ENCODE measurements at regions of chr2 and their contacts with region 1.

Region 1: DNA sequence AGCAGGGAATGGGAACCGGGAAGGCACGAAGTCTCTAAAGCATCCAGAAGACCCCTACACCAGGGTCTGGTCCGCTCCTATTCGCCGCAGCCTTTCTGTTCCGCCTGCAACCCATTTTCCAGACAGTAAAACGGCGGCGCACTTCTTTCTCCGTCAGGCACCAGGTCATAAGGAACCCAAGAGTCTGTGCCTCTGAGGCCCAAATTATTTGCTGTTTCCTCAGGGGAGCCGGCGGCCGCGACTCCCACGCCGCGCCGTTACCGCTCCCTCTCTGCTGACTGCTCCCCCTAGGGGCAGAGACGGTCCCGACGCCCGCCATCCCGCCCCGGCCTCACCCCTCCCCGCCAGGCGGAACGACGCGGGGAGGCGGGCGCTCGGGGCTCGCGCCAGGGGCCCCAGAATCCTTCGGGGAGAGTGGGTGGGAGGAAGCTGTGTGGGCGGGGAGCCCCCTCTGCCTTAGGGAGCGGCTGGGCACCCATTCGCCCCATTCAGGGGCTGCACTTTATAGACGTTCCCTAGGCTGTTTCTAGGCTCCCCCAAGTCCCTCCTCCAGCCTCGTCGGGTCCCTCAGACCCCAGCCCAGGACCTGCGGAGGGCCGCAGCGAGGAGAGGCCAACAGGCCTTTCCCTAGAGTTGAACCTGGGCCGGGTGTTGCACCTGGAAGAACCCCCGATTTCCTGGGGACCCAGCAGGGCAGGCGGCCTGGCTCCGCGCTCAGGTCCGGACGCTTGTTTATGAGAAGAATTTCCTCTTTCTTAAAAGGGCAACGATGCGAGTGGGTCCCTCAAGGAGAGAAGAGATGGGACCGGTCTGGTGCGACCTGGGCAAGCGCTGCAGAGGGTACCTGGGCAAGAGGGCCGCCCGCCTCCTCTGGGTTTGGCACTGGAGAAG is 3.6 kb upstream of the CTDSP1 start:
- DNase-seq: peak; percentile 93
- CTCF ChIP-seq: peak; percentile 77

Region 2: DNA sequence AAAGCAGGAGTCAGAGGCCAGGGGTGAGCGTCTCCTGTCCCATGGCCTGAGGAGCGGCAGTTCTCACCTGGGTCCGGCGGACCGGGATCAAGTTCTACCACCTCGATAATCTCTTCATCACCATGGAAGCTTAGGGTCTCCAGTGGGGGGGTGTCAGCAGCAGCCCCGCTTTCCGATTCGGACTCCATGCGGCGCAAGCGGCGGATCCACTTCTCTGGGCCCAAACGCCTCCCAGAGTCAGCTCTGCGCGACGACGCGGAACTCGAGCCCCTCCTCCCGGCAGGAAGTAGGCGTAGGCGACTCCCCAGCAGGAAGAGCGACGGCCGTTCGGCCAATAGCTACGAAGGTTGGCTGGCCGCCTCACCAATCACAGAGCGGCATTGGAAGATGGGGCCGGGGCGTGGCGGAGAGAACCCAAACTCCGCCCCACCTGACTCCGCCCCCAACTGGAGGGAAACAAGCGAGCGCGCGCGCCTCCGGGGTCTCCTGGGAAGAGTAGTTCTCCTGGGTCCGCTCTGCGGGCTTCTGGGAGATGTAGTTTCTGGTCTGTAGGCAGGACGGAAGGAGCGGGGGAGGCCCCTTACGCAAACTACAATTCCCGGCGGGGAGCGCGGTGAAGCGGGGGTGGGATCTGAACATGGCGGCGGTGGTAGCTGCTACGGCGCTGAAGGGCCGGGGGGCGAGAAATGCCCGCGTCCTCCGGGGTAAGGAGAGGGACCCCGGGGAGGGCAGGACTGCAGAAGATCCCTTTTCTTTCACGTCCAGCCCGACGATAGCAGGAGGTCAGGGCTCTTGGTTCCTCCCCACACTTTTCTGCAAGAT is 125.9 kb before region 1 on chr2 and contains the starts of genes AAMP and PNKD:
- CTCF ChIA-PET with region 1: interaction called, 59 read pairs
- POLR2A ChIA-PET with region 1: no interaction called
- DNase-seq: peak; percentile 99
- CTCF ChIP-seq: no peak